ENCODE measurements at regions of chr4 and their contacts with region 1.

Region 1: DNA sequence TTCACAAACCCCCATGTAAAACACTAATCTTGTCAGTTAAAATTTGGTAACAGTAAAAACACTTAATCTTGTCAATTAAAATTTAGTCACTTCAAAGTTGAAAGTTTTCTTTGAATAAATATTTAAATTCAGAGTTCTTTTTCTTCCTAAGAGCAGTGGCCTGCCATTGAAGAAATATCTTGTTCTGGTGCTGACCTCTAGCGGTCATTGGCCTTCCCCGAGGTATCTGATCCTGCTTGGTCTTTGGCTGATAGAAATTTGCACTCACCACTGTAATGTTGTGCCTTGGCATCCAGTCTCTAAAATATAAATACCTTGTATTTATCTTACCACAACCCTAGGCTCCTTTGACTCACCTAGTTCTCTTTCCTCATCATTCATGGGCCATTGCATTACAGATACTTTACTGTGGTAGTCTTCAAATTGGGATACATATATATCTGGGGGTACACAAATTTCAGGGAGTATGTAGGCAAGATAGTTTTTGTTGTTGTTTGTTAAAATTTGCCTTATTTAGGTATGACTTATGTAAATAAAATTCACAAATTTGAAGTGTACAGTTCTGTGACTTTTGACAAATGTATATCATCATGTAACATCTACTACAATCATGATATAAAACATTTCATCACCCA is 6.7 kb upstream of the ART3 start:
- DNase-seq: peak; percentile 55
- H3K4me3 ChIP-seq: no peak overlapping the region
- H3K27ac ChIP-seq: no peak overlapping the region
- H3K4me1 ChIP-seq: peaks cover 4% of the 10 kb centered on the region
- H3K27me3 ChIP-seq: no peaks in the 10 kb centered on the region
- CTCF ChIP-seq: peak; percentile 78 to 87

Region 2: GRCh38 chr4:76087007-76087769 is 19.4 kb after region 1 on chr4:
- CTCF ChIA-PET with region 1: no interaction called
- dilution Hi-C with region 1: no loop called
- in situ Hi-C with region 1: no loop called
- intact Hi-C with region 1: loop called (anchors 1 kb)
- DNase-seq: peak; percentile 82
- H3K4me3 ChIP-seq: no peak overlapping the region
- H3K27ac ChIP-seq: no peak overlapping the region
- H3K4me1 ChIP-seq: peaks cover 21% of the 10 kb centered on the region
- H3K27me3 ChIP-seq: no peaks in the 10 kb centered on the region
- CTCF ChIP-seq: peak; percentile 76 to 82